ENCODE measurements at regions of chr2 and their contacts with region 1.

Region 1: DNA sequence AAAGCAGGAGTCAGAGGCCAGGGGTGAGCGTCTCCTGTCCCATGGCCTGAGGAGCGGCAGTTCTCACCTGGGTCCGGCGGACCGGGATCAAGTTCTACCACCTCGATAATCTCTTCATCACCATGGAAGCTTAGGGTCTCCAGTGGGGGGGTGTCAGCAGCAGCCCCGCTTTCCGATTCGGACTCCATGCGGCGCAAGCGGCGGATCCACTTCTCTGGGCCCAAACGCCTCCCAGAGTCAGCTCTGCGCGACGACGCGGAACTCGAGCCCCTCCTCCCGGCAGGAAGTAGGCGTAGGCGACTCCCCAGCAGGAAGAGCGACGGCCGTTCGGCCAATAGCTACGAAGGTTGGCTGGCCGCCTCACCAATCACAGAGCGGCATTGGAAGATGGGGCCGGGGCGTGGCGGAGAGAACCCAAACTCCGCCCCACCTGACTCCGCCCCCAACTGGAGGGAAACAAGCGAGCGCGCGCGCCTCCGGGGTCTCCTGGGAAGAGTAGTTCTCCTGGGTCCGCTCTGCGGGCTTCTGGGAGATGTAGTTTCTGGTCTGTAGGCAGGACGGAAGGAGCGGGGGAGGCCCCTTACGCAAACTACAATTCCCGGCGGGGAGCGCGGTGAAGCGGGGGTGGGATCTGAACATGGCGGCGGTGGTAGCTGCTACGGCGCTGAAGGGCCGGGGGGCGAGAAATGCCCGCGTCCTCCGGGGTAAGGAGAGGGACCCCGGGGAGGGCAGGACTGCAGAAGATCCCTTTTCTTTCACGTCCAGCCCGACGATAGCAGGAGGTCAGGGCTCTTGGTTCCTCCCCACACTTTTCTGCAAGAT is at the starts of genes AAMP and PNKD:
- DNase-seq: peak; percentile 100
- H3K4me3 Mint-ChIP-seq: peak within 1 kb of the TSS; percentile 89
- H3K27ac Mint-ChIP-seq: peak within 1 kb of the TSS; percentile 87
- H3K4me1 Mint-ChIP-seq: peaks cover 38% of the 10 kb centered on the region
- H3K27me3 Mint-ChIP-seq: peaks cover 1% of the 10 kb centered on the region
- total RNA-seq, gene AAMP: 88.0 and 90.2 TPM in 2 replicates
- total RNA-seq, gene PNKD: 18.6 and 20.3 TPM in 2 replicates

Region 2: GRCh38 chr2:218216674-218217359 is 53.3 kb before region 1 on chr2 and contains the start of gene ARPC2:
- intact Hi-C with region 1: loop called (anchors 1 kb)
- DNase-seq: peak; percentile 96
- H3K4me3 Mint-ChIP-seq: peak within 1 kb of the TSS; percentile 91
- H3K27ac Mint-ChIP-seq: peak within 1 kb of the TSS; percentile 95
- H3K4me1 Mint-ChIP-seq: peaks cover 36% of the 10 kb centered on the region
- H3K27me3 Mint-ChIP-seq: no peaks in the 10 kb centered on the region
- total RNA-seq, gene ARPC2: 507 and 509 TPM in 2 replicates

Region 3: DNA sequence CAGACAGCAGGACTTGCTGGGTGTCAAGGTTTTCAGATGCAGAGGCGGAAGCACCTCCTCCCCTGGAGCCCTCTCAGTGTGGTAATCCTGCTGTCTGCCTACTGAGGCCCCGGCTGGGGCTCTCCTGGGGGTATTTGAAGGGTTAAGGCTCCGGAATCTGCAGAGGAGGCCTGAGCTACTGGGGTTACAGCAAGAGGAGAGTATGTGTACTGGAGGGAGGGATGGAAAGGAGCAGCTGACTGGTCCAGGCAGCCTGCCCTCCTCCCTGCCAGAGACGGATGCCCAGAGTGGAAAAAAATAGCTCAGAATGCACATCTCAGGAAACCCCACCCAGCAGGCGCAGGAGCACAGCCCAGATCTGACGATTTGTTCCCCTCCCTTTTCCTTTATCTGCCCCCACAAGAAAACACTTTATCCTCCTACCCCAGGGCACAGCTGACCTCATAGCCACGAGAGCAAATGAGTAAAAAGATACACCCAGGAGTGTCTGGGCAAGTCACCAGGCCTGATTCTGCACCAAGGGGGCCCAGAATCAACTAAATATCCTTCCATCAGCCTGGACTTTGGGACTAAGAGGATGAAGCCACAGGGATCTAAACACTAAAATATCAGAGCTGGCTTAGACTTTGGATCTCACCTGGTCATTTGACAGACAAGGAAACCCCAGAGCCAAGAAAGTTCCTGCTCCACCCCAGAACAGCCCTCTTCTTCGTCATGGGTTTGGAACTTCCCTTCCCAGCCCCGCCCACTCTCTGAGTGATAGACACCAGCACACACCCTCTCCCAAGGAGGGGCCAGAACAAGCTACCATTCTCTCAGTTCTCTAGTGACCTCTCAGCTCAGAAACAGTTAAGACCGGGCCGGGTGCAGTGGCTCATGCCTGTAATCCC is 16.7 kb after region 1 on chr2:
- intact Hi-C with region 1: loop called (anchors 1 kb)
- DNase-seq: peak; percentile 82
- H3K4me3 Mint-ChIP-seq: peak overlapping the region; percentile 94
- H3K27ac Mint-ChIP-seq: peak overlapping the region; percentile 99
- H3K4me1 Mint-ChIP-seq: peaks cover 72% of the 10 kb centered on the region
- H3K27me3 Mint-ChIP-seq: no peaks in the 10 kb centered on the region

Region 4: GRCh38 chr2:218322895-218323808 is 53.0 kb after region 1 on chr2:
- intact Hi-C with region 1: loop called (anchors 2 kb)
- DNase-seq: peak; percentile 28
- H3K4me3 Mint-ChIP-seq: peak overlapping the region; percentile 84
- H3K27ac Mint-ChIP-seq: no peak overlapping the region
- H3K4me1 Mint-ChIP-seq: peaks cover 22% of the 10 kb centered on the region
- H3K27me3 Mint-ChIP-seq: peaks cover 20% of the 10 kb centered on the region

Region 5: GRCh38 chr2:218568190-218569037 is 298.3 kb after region 1 on chr2 and contains the starts of genes CNOT9 and USP37:
- intact Hi-C with region 1: loop called (anchors 1 kb)
- DNase-seq: peak; percentile 100
- H3K4me3 Mint-ChIP-seq: peak within 1 kb of the TSS; percentile 94
- H3K27ac Mint-ChIP-seq: peak within 1 kb of the TSS; percentile 99
- H3K4me1 Mint-ChIP-seq: peaks cover 59% of the 10 kb centered on the region
- H3K27me3 Mint-ChIP-seq: peaks cover 3% of the 10 kb centered on the region
- total RNA-seq, gene CNOT9: 138 TPM in 2 replicates
- total RNA-seq, gene USP37: 43.5 and 50.4 TPM in 2 replicates

Region 6: GRCh38 chr2:218710687-218711549 is 440.8 kb after region 1 on chr2 and contains the start of gene TTLL4:
- intact Hi-C with region 1: loop called (anchors 1 kb)
- DNase-seq: peak; percentile 99
- H3K4me3 Mint-ChIP-seq: peak within 1 kb of the TSS; percentile 94
- H3K27ac Mint-ChIP-seq: peak within 1 kb of the TSS; percentile 87
- H3K4me1 Mint-ChIP-seq: peaks cover 27% of the 10 kb centered on the region
- H3K27me3 Mint-ChIP-seq: peaks cover 12% of the 10 kb centered on the region
- total RNA-seq, gene TTLL4: 70.6 and 78.3 TPM in 2 replicates

Measured in activated T-helper 1 cell treated with anti-CD3 and anti-CD28 coated beads, Interleukin-12 subunit alpha, Interleukin-12 subunit beta, Interleukin-2, Interleukin-4 antibody, amounts not matched to agents 30 ng/mL and 10 ng/mL and 1 ng/mL, durations not matched to agents 14 hours and 24 hours and 36 hours (primary cell).